ENCODE measurements at regions of chr5 and their contacts with region 1.

Region 1: DNA sequence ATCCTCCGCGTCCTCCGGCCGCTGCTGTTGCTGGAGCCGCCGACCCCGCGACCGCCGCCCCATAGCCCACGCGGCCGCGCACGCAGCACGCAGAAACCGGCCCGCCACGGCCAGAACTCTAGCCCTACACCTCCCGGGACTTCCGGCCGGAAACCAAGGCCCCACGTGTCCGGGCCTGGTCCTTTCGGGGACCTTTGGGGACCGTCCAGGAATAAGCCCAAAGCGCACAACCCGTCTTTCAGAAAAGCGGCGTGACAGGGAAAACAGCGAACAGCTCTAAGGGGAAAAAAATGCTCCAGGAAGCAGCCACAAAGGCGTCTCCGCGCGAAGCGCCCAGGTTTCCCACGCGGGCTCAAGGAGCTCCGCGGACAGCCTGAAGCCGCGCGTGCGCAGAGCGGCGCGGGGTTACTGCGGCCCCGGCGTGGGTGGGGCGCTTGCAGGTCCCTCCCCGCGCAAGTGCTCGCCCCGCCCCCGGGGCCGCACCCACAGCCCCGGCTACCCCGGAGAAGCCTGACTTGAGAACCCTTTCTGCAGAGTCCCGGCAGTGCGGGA is at the starts of genes NSUN2 and SRD5A1:
- DNase-seq: peak; percentile 96
- ATAC-seq: peak; percentile 89
- H3K4me3 Mint-ChIP-seq: peak within 1 kb of the TSS; percentile 99
- H3K27ac Mint-ChIP-seq: peak within 1 kb of the TSS; percentile 98
- H3K4me1 Mint-ChIP-seq: peaks cover 31% of the 10 kb centered on the region
- H3K27me3 Mint-ChIP-seq: no peaks in the 10 kb centered on the region
- total RNA-seq, gene NSUN2: 91.1 to 97.1 TPM
- total RNA-seq, gene SRD5A1: 7.6 to 11.1 TPM

Region 2: GRCh38 chr5:5421961-5422818 is 1210.8 kb before region 1 on chr5 and contains the start of gene ICE1:
- CTCF ChIA-PET with region 1: no interaction called
- POLR2A ChIA-PET with region 1: no interaction called
- intact Hi-C with region 1: loop called in 1 of 2 experiments (anchors 1 kb)
- DNase-seq: peak; percentile 95
- ATAC-seq: peak; percentile 91
- H3K4me3 Mint-ChIP-seq: peak within 1 kb of the TSS; percentile 90
- H3K27ac Mint-ChIP-seq: peak within 1 kb of the TSS; percentile 91
- H3K4me1 Mint-ChIP-seq: peaks cover 12% of the 10 kb centered on the region
- H3K27me3 Mint-ChIP-seq: no peaks in the 10 kb centered on the region
- total RNA-seq, gene ICE1: 26.5 to 27.4 TPM

Region 3: GRCh38 chr5:6525910-6526309 is 107.1 kb before region 1 on chr5:
- CTCF ChIA-PET with region 1: no interaction called
- POLR2A ChIA-PET with region 1: no interaction called
- intact Hi-C with region 1: no loop called
- DNase-seq: no peak
- ATAC-seq: no peak
- H3K4me3 Mint-ChIP-seq: no peak overlapping the region
- H3K27ac Mint-ChIP-seq: no peak overlapping the region
- H3K4me1 Mint-ChIP-seq: no peaks in the 10 kb centered on the region
- H3K27me3 Mint-ChIP-seq: peaks cover 7% of the 10 kb centered on the region

Region 4: DNA sequence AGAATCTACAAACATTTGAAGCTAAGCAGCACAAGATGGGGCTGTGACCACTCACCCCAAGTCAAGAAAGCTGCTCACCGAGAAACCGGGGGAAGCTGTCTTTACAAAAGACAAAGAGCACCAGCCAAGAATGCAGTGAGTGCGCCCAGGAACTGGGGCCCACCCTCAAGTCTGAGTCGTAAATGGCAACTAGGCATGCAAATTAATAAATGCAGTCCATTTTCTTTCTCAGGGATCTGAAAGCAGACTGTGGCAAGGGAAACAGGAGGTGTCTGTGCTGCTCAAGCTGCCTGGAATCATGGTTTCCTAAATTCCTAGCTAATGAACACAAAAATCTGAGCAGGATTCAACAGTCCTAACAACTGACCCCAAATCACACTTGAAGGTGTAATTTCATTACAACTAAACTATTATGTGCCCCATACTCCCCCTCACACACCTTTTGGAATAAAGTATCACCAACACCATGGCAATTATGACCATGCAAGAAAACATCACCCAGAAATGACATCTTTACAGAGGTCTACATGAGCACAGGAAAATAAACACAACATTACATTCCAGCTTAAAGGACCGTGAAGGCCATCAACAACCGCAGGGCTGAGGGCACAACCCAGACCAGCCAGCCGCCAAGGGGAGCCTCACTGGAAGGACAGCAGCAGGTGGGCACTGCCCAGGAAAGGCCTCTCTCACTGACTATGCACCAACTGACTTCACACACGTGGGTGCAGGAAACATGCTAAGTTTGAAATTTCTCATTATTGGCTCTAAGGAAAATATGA is 17.8 kb before region 1 on chr5:
- CTCF ChIA-PET with region 1: interaction called, 6 read pairs
- POLR2A ChIA-PET with region 1: no interaction called
- intact Hi-C with region 1: loop called in 1 of 2 experiments (anchors 2 kb)
- DNase-seq: no peak
- ATAC-seq: no peak
- H3K4me3 Mint-ChIP-seq: no peak overlapping the region
- H3K27ac Mint-ChIP-seq: no peak overlapping the region
- H3K4me1 Mint-ChIP-seq: peaks cover 22% of the 10 kb centered on the region
- H3K27me3 Mint-ChIP-seq: no peaks in the 10 kb centered on the region

Region 5: DNA sequence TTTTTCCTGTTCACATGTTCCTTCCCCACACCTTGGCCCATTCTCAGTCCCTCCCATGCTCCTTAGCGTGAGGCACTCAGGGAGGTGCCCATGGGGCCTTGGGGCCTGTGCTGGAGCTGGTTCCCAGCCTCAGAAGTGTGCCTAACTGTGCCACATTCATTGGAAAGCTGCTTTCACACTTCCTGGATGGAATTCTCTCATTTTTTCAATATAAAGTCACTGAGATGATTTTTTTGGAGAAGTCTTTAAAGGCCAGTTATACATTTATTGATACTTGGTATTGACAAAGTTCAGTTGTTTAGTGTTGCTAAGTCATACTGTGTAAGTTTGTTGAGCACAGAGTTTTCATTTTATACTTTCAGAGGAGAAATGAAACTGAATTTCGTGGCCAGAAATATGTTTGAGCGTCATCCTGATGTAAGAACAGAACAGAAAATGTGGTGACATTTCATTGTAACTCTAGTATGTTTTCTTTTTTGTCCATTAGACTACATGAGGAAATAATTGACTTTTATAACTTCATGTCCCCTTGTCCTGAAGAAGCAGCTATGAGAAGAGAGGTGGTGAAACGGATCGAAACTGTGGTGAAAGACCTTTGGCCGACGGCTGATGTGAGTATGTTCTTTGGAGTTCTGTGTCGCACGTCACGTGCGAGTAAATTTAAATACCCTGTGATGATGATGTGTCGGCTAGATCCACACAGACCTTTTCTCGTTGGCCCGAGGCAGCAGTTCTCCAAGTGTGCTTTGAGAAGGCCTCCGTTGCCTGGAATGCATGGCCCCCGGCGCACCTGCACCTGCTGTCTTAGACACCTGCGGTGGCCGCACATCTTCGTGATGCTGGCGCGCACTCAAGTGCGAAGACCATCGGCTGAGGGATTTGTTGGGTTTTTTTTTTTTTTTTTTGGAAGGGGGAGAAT is 104.3 kb after region 1 on chr5:
- CTCF ChIA-PET with region 1: interaction called, 3 read pairs
- POLR2A ChIA-PET with region 1: interaction called, 3 read pairs
- intact Hi-C with region 1: loop called in 1 of 2 experiments (anchors 2 kb)
- DNase-seq: peak; percentile 43
- ATAC-seq: peak; percentile 78
- H3K4me3 Mint-ChIP-seq: peak overlapping the region; percentile 34
- H3K27ac Mint-ChIP-seq: peak overlapping the region; percentile 97
- H3K4me1 Mint-ChIP-seq: peaks cover 52% of the 10 kb centered on the region
- H3K27me3 Mint-ChIP-seq: no peaks in the 10 kb centered on the region

Region 6: DNA sequence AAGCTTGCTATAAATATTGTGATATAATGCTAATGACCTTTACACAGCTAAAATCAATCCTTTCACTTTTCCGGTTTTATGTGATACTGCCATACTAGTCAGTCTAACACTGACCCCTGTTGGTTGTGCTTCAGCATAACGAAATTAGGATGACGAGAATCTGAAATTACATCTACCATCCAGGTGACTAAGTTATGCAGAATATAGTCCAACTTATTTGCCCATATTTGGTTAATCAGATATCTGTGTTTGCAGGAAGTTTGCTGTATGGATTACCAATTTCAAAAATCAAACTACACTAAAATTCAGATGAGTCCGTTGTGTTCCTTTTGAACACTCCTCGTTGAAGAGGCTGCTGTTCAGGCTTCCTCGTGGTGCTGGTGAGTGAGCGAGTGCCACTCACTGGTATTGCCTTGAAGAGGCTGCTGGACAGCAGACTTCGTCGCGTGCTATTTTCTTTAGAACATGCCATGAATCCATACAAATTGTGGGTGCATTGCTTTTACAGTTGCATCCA is 112.8 kb after region 1 on chr5:
- CTCF ChIA-PET with region 1: interaction called, 9 read pairs
- POLR2A ChIA-PET with region 1: no interaction called
- intact Hi-C with region 1: loop called (anchors 1 to 2 kb)
- DNase-seq: no peak
- ATAC-seq: peak; percentile 87
- H3K4me3 Mint-ChIP-seq: no peak overlapping the region
- H3K27ac Mint-ChIP-seq: no peak overlapping the region
- H3K4me1 Mint-ChIP-seq: peaks cover 5% of the 10 kb centered on the region
- H3K27me3 Mint-ChIP-seq: no peaks in the 10 kb centered on the region

Region 7: DNA sequence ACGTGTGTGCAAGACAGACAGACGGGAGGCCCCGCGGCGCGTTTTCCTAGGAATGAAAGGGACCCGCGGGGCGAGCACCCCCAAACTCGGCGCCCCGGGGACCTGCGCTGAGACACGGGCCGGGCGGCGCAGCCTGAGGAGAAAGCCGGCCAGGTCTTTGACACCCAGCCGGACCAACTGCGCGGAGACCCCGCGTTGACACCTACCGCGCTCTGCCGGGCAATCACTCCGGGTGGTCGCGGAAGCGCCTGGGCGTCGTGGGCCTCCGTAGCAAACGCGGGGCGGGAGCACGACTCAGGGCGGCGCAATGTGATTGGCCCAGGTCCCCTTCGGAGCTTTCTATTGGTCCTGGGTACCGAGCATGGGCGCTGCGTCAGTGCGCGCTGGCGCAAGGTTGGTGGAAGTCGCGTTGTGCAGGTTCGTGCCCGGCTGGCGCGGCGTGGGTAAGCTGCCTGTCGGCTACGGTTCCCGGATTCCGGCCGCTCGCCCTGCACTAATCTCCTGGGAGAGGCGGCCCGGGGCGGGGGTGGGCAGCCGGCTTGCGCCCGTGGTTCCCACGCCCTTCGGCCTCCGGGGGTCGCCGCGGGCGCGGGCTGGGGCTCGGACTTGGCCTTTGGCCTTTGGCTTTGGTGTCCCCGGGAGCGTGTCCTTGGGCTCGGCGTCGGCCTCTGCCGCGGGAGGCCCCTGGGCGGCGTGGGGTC is 1235.9 kb after region 1 on chr5 and contains the starts of genes FASTKD3 and MTRR:
- CTCF ChIA-PET with region 1: no interaction called
- POLR2A ChIA-PET with region 1: no interaction called
- intact Hi-C with region 1: loop called (anchors 1 to 2 kb)
- DNase-seq: peak; percentile 93
- ATAC-seq: peak; percentile 99
- H3K4me3 Mint-ChIP-seq: peak within 1 kb of the TSS; percentile 94
- H3K27ac Mint-ChIP-seq: peak within 1 kb of the TSS; percentile 95
- H3K4me1 Mint-ChIP-seq: peaks cover 68% of the 10 kb centered on the region
- H3K27me3 Mint-ChIP-seq: no peaks in the 10 kb centered on the region
- total RNA-seq, gene FASTKD3: 9.2 to 9.6 TPM
- total RNA-seq, gene MTRR: 49.3 to 52.9 TPM

Measured in activated CD4-positive, alpha-beta T cell treated with anti-CD3 and anti-CD28 coated beads for 36 hours (primary cell).